Activated CD4-positive, alpha-beta memory T cell treated with anti-CD3 and anti-CD28 coated beads for 36 hours (primary cell): ENCODE measurements at regions of chr12 and their contacts with region 1.

Region 1: GRCh38 chr12:113221181-113221997 is at the start of gene TPCN1:
- DNase-seq: peak; percentile 100
- H3K4me3 Mint-ChIP-seq: peak within 1 kb of the TSS; percentile 93
- H3K27ac Mint-ChIP-seq: peak within 1 kb of the TSS; percentile 95
- H3K4me1 Mint-ChIP-seq: peaks cover 35% of the 10 kb centered on the region
- H3K27me3 Mint-ChIP-seq: no peaks in the 10 kb centered on the region
- total RNA-seq, gene TPCN1: 44.0 to 51.6 TPM

Region 2: GRCh38 chr12:112978163-112979040 is 243.0 kb before region 1 on chr12 and contains the start of gene OAS2:
- CTCF ChIA-PET with region 1: no interaction called
- POLR2A ChIA-PET with region 1: no interaction called
- intact Hi-C with region 1: loop called (anchors 5 kb)
- DNase-seq: peak; percentile 91
- H3K4me3 Mint-ChIP-seq: peak within 1 kb of the TSS; percentile 81
- H3K27ac Mint-ChIP-seq: peak within 1 kb of the TSS; percentile 100
- H3K4me1 Mint-ChIP-seq: peaks cover 24% of the 10 kb centered on the region
- H3K27me3 Mint-ChIP-seq: no peaks in the 10 kb centered on the region
- total RNA-seq, gene OAS2: 140 to 148 TPM

Region 3: DNA sequence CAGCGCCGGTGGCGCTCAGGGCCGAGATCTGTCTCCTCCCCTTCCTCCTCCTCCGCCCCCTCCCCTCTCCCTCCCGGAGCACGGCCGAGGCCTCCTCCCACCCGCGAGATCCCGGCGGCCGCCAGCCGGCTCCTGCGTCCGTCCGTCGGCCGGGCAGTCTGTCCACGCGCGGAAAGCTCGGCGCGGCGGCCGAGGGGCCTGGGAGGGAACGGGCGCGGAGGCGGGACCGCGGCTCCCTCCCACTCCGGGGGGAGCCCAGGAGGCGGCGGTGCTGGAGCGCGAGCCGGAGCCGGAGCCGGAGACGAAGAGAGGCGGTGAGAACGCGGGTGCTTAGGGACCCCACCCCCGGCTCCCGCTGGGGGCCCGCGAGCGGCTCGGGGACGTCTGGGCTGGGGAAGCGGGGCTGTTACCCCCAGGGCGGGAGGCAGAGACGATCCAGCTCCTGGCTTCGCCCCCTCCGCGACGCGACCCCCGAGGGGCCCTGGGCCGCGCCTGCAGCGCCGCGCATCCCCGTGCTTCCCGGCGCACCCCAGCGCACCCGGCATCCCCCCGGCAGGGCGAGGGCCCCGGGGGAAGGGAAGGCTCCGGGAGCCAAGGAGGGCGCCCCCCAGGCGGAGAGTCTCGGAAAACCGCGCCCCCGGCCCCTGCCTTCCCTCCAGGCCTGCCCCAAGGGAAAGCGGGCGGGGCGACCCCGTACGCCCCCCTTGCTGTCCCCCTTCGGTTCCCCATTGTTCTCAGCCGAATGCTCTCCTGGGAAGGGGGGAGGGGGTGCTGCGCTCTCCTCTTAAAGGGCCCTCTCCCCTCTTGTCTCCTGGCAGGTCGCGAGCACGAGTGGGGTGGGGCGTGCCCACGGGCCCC is 164.5 kb before region 1 on chr12 and contains the start of gene DTX1:
- CTCF ChIA-PET with region 1: no interaction called
- POLR2A ChIA-PET with region 1: no interaction called
- intact Hi-C with region 1: no loop called
- DNase-seq: peak; percentile 54
- H3K4me3 Mint-ChIP-seq: peak within 1 kb of the TSS; percentile 74
- H3K27ac Mint-ChIP-seq: no peak within 1 kb of the TSS
- H3K4me1 Mint-ChIP-seq: peaks cover 22% of the 10 kb centered on the region
- H3K27me3 Mint-ChIP-seq: no peaks in the 10 kb centered on the region
- total RNA-seq, gene DTX1: 11.0 to 12.4 TPM

Region 4: GRCh38 chr12:113165521-113166450 is 55.6 kb before region 1 on chr12:
- CTCF ChIA-PET with region 1: no interaction called
- POLR2A ChIA-PET with region 1: no interaction called
- intact Hi-C with region 1: no loop called
- DNase-seq: no peak
- H3K4me3 Mint-ChIP-seq: no peak overlapping the region
- H3K27ac Mint-ChIP-seq: no peak overlapping the region
- H3K4me1 Mint-ChIP-seq: no peaks in the 10 kb centered on the region
- H3K27me3 Mint-ChIP-seq: no peaks in the 10 kb centered on the region

Region 5: GRCh38 chr12:113196996-113197395 is 24.4 kb before region 1 on chr12:
- CTCF ChIA-PET with region 1: interaction called, 8 read pairs
- POLR2A ChIA-PET with region 1: interaction called, 4 read pairs
- intact Hi-C with region 1: loop called (anchors 1 kb)
- DNase-seq: peak; percentile 76
- H3K4me3 Mint-ChIP-seq: no peak overlapping the region
- H3K27ac Mint-ChIP-seq: no peak overlapping the region
- H3K4me1 Mint-ChIP-seq: peaks cover 2% of the 10 kb centered on the region
- H3K27me3 Mint-ChIP-seq: no peaks in the 10 kb centered on the region

Region 6: GRCh38 chr12:113232840-113233585 is 11.6 kb after region 1 on chr12:
- CTCF ChIA-PET with region 1: interaction called, 10 read pairs
- POLR2A ChIA-PET with region 1: interaction called, 12 read pairs
- intact Hi-C with region 1: loop called (anchors 1 kb)
- DNase-seq: peak; percentile 77
- H3K4me3 Mint-ChIP-seq: peak overlapping the region; percentile 43
- H3K27ac Mint-ChIP-seq: peak overlapping the region; percentile 75
- H3K4me1 Mint-ChIP-seq: peaks cover 50% of the 10 kb centered on the region
- H3K27me3 Mint-ChIP-seq: no peaks in the 10 kb centered on the region

Region 7: DNA sequence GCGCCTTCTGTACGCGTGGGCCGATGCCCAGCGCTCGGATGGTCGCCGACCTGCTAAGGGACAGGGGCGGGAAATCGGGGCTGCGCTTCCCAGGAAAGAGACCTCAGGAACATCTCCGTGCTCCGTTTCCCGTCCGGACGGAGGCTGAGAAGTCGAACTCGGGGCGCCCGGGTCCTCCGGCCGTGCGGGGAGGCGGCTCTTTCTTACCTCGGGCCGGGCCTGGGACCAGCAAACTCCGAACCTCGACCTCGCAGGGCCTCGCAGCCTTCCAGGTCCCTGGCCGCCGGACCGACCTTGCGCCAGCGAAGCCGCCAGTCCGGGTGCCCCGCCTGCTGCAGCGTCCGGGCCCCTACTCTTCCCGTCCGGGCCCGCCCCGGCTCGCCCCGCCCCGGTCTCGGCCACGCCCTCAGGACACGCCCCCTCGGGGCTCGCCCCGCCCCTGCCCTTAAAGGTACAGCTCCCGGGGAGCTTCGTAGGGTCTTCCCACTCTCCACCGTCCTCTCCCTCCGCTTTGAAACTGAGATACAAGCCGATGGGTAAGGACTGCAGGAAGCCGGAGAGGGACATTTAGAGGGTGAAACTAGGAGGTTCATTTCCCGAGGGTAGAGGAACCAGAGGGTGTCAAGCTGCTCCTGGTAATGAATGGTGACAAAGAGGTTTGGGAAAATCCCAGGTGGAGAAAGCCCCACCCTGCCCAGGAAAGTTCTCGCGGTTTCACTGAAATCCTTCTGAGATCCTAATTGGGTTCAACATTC is 113.6 kb after region 1 on chr12 and contains the start of gene SLC8B1:
- CTCF ChIA-PET with region 1: no interaction called
- POLR2A ChIA-PET with region 1: interaction called, 5 read pairs
- intact Hi-C with region 1: loop called (anchors 1 kb)
- DNase-seq: peak; percentile 93
- H3K4me3 Mint-ChIP-seq: peak within 1 kb of the TSS; percentile 97
- H3K27ac Mint-ChIP-seq: peak within 1 kb of the TSS; percentile 75
- H3K4me1 Mint-ChIP-seq: peaks cover 26% of the 10 kb centered on the region
- H3K27me3 Mint-ChIP-seq: no peaks in the 10 kb centered on the region
- total RNA-seq, gene SLC8B1: 21.5 to 22.0 TPM

Region 8: GRCh38 chr12:113965951-113966797 is 744.8 kb after region 1 on chr12 and contains the start of gene RBM19:
- CTCF ChIA-PET with region 1: no interaction called
- POLR2A ChIA-PET with region 1: no interaction called
- intact Hi-C with region 1: loop called (anchors 1 kb)
- DNase-seq: peak; percentile 98
- H3K4me3 Mint-ChIP-seq: peak within 1 kb of the TSS; percentile 100
- H3K27ac Mint-ChIP-seq: peak within 1 kb of the TSS; percentile 92
- H3K4me1 Mint-ChIP-seq: peaks cover 53% of the 10 kb centered on the region
- H3K27me3 Mint-ChIP-seq: no peaks in the 10 kb centered on the region
- total RNA-seq, gene RBM19: 69.6 to 74.1 TPM